A673 (cell line): ENCODE measurements at regions of chr12 and their contacts with region 1.

Region 1: GRCh38 chr12:52582971-52583456 is 9.4 kb upstream of the KRT74 start:
- DNase-seq: peak; percentile 75
- H3K4me3 ChIP-seq: no peak overlapping the region
- H3K27ac ChIP-seq: no peak overlapping the region
- H3K4me1 ChIP-seq: no peaks in the 10 kb centered on the region
- H3K27me3 ChIP-seq: no peaks in the 10 kb centered on the region
- CTCF ChIP-seq: peak; percentile 75

Region 2: GRCh38 chr12:51371295-51371953 is 1211.6 kb before region 1 on chr12:
- CTCF ChIA-PET with region 1: no interaction called
- POLR2A ChIA-PET with region 1: no interaction called
- intact Hi-C with region 1: no loop called
- DNase-seq: peak; percentile 56
- H3K4me3 ChIP-seq: no peak overlapping the region
- H3K27ac ChIP-seq: no peak overlapping the region
- H3K4me1 ChIP-seq: no peaks in the 10 kb centered on the region
- H3K27me3 ChIP-seq: no peaks in the 10 kb centered on the region
- CTCF ChIP-seq: no peak

Region 3: DNA sequence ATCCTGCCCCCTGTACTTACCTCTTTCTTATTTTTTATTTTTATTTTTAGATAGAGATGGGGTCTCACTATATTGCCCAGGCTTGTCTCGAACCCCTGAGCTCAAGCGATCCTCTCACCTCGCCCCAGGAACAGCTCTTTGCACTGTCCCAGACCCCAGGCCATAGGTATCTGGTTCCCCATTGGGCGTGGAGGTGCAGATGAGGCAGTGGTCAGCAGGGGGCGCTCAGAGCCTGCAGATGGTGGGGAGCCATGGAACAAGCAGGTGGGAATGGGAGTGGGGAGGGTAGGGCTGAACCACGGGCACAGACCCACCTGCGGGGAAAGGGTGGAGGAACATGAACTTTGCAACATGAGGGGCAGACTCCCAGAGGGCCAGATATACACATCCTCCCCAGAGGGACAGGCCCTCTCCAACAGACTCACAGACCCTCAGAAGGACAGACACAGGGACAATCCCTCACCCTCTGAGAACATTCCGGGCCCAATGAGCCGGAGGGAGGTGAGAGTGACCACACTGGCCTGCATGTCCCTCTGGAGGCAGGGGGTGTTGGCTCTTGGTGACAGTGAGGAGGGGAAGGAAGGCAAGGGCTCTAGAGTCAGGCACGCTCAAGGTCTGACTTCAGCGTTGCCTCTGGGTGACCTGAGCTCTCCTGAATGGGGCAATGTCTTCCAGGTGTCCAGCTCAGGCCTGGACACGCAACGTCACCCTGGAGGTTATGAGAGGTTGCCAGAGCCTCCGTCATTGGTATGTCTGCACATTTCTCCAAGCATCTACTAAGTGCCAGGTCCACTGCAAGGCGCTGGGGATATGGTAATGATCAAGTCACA is 426.1 kb before region 1 on chr12:
- CTCF ChIA-PET with region 1: no interaction called
- POLR2A ChIA-PET with region 1: no interaction called
- intact Hi-C with region 1: loop called (anchors 10 kb)
- DNase-seq: peak; percentile 74
- H3K4me3 ChIP-seq: no peak overlapping the region
- H3K27ac ChIP-seq: no peak overlapping the region
- H3K4me1 ChIP-seq: no peaks in the 10 kb centered on the region
- H3K27me3 ChIP-seq: no peaks in the 10 kb centered on the region
- CTCF ChIP-seq: peak; percentile 99

Region 4: GRCh38 chr12:52600941-52601481 is 18.0 kb after region 1 on chr12 and contains the start of gene KRT72:
- CTCF ChIA-PET with region 1: no interaction called
- POLR2A ChIA-PET with region 1: no interaction called
- intact Hi-C with region 1: no loop called
- DNase-seq: no peak
- H3K4me3 ChIP-seq: no peak within 1 kb of the TSS
- H3K27ac ChIP-seq: no peak within 1 kb of the TSS
- H3K4me1 ChIP-seq: peaks cover 3% of the 10 kb centered on the region
- H3K27me3 ChIP-seq: peaks cover 36% of the 10 kb centered on the region
- CTCF ChIP-seq: no peak
- total RNA-seq, gene KRT72: not detected in 2 replicates

Region 5: DNA sequence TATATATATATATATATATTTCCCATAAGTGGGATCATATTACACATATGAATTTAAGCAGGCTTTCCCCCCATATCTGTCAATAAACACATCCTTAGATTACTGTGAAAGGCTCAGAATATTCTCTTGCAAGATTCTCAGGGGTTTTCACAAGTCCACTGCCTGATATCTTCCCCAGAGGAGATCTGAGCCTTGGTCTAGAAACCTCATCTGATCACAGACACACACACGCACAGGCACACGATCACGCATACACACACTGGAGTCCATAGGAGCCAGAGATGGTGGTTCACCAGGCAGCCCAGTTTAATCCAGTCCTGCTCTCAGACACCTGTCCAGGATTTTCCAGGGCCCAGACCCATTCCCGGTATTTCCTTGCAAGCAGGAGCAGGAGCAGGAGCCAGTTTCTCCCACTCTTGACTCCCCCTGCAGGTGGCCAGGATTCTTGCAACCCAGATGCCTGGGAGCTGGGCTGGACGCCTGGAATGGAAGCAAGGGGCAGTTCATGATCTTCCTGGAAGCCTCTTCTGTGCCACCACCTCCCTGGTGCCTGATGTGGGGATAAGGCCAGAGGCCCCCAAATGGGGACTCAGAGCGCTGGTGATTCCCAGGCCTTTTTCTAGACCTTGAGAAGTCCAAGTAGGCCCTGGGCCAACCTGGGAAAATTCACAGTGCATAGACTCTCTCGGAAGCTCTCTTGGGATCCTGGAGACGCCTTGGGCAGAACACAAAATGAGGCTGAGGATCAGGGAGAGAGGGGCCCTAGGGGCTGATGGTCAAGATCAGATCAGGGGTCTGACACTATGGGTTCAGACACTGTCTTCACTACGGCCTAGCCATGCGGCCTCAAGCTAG is 282.3 kb after region 1 on chr12:
- CTCF ChIA-PET with region 1: interaction called, 14 read pairs
- POLR2A ChIA-PET with region 1: no interaction called
- intact Hi-C with region 1: loop called (anchors 1 kb)
- DNase-seq: peak; percentile 77
- H3K4me3 ChIP-seq: no peak overlapping the region
- H3K27ac ChIP-seq: no peak overlapping the region
- H3K4me1 ChIP-seq: peaks cover 19% of the 10 kb centered on the region
- H3K27me3 ChIP-seq: no peaks in the 10 kb centered on the region
- CTCF ChIP-seq: peak; percentile 92

Region 6: DNA sequence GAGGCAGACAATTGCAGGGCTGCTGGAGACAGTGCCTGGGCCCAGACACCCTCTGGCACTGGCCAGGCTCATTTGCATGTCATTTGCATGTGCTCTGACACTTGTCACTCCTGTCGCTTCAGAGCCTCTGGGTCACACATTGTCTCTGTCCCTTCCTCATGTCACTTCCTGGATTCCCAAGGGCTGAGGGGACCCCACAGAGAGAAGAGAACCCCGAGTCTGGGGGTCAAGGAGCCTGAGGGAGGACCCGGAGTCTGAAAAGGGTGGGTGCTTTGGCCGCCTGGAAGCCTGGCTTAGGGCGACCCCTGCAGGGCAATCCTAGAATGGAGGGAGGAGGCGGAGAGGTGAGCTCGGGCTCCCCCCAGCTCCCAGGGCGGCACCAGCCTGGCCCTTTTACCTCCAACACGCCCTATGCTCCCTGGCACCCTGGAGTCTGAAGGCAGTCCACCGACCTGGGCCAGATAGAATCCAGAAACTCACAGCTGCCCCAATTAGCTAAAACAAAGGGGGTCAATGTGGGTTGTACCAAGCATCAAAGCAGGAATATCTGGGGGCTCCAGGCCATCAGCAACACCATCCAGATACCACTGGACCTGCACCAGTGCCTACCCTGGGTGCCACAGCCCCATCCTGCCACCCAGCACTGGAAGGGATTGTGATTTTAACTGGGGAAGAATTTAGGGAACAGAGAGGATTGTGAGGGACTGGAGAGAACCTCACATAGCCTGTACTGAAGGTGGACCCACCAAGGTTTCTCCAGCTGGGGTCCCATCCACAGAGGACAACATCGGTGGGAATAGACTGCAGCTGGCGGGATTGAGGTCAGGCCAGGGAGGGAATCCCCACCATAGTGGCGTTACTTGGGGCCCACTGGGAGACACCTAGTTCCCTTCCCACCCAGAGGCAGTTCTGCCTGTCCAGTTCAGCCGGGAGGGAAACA is 287.6 kb after region 1 on chr12:
- CTCF ChIA-PET with region 1: interaction called, 14 read pairs
- POLR2A ChIA-PET with region 1: no interaction called
- intact Hi-C with region 1: loop called (anchors 1 kb)
- DNase-seq: peak; percentile 73
- H3K4me3 ChIP-seq: no peak overlapping the region
- H3K27ac ChIP-seq: peak overlapping the region; percentile 51
- H3K4me1 ChIP-seq: peaks cover 52% of the 10 kb centered on the region
- H3K27me3 ChIP-seq: no peaks in the 10 kb centered on the region
- CTCF ChIP-seq: peak; percentile 93